Activated CD8-positive, alpha-beta memory T cell treated with anti-CD3 and anti-CD28 coated beads, Interleukin-2, amount 10 ng/mL, durations not matched to agents 7 days and 5 days (primary cell): ENCODE measurements at regions of chr14 and their contacts with region 1.

Region 1: DNA sequence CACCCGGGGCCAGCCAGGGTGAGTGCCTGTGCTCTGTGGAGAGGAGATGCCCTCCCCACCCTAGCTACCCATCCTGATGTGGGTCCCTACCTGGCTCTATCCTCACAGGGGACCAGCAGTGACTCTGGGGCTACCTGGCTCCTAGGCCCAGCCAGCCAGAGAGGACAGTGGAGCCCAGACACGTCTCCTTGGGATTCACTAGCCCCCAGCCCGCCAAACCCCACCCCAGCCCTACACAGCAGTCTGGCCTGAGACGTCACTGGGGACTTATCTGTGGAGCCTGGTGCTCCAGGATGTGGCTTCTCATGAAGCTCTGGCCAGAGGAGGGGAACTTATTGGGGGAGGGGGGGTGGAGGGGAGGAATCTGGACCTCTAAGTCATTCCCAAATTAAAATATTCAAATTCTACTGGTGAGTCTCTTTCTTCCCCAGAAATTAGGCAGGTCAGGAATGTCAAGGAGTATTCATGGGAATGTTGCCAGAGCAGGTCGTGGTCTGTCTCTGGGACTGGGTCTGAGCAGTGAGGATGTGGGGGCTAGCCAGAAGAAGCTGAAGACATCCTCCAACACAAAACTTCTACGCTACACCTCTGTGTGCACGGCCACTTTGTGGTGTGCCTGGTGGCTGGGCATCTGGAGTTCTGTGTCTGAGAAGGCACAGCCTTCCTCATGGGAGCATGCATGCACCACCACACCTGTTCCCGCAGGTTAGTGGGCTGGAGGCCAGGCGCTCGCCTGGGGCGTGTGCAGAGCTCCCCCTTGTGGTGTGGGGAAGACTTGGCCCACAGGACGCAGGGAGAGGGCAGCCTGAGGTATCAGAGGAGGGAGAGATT is 2.7 kb downstream of the CMTM5 start:
- DNase-seq: peak; percentile 71
- ATAC-seq: peak; percentile 86
- H3K4me3 Mint-ChIP-seq: no peak overlapping the region
- H3K27ac Mint-ChIP-seq: no peak overlapping the region
- H3K4me1 Mint-ChIP-seq: peaks cover 8% of the 10 kb centered on the region
- H3K27me3 Mint-ChIP-seq: peaks cover 7% of the 10 kb centered on the region

Region 2: DNA sequence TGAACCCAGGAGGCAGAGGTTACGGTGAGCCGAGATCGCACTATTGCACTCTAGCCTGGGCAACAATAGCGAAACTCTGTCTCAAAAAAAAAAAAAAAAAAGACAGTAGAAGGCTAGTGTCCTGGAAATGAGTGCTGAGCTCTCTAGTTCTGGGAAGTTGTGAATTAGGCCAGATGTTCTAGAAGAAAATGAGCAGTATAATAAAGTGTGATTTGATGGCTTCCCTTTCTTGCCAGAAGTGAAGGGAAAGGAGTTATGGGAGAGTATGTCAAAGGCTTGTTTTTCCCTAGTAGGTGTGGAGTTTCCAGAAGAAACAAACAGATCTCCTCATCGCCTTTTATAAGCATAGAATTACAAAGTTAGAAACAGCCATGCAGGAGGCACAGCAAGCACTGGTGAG is 121.3 kb before region 1 on chr14:
- CTCF ChIA-PET with region 1: interaction called, 10 read pairs
- DNase-seq: no peak
- ATAC-seq: no peak
- H3K4me3 Mint-ChIP-seq: no peak overlapping the region
- H3K27ac Mint-ChIP-seq: no peak overlapping the region
- H3K4me1 Mint-ChIP-seq: no peaks in the 10 kb centered on the region
- H3K27me3 Mint-ChIP-seq: peaks cover 57% of the 10 kb centered on the region

Region 3: DNA sequence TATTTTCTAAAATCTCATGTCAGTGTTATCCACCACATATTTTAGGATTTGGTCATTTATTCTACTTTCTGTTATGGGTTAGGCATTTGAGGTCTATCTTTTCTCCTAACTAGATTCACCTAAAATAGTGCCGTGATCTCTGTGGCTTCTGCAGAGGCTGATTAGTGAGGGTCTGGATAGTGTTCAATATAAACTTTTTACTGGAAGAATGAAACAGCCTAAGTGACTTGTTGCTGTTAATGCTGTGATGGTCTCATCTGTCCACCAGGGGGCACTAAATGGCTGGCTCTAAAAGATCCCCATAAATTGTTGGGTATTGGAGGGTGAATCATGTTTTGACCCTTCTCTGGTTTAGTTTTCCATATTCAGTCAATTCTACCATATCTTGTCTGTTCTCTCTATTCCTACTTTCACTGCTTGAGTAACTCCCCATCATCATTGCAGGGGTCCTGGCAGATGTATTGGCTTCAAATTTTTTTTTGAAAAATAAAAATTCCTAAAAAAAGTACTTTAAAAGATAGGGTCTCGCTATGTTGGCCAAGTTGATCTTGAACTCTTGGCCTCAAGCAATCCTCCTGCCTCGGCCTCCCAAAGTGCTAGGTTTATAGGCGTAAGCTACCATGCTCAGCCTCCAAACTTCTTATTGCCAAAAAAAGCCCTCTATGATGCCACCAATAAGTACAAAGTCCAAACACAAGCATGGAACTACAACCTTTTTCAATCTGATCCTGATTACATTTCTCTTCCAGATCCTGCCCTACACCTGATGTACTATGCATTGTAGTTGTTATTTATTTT is 51.4 kb before region 1 on chr14:
- CTCF ChIA-PET with region 1: interaction called, 37 read pairs
- DNase-seq: peak; percentile 76
- ATAC-seq: peak; percentile 67
- H3K4me3 Mint-ChIP-seq: no peak overlapping the region
- H3K27ac Mint-ChIP-seq: no peak overlapping the region
- H3K4me1 Mint-ChIP-seq: peaks cover 10% of the 10 kb centered on the region
- H3K27me3 Mint-ChIP-seq: no peaks in the 10 kb centered on the region

Region 4: GRCh38 chr14:23392613-23393012 is 13.0 kb after region 1 on chr14:
- CTCF ChIA-PET with region 1: interaction called, 10 read pairs
- DNase-seq: no peak
- ATAC-seq: no peak
- H3K4me3 Mint-ChIP-seq: no peak overlapping the region
- H3K27ac Mint-ChIP-seq: no peak overlapping the region
- H3K4me1 Mint-ChIP-seq: no peaks in the 10 kb centered on the region
- H3K27me3 Mint-ChIP-seq: peaks cover 13% of the 10 kb centered on the region